BJ (cell line): ENCODE measurements at regions of chr3 and their contacts with region 1.

Region 1: DNA sequence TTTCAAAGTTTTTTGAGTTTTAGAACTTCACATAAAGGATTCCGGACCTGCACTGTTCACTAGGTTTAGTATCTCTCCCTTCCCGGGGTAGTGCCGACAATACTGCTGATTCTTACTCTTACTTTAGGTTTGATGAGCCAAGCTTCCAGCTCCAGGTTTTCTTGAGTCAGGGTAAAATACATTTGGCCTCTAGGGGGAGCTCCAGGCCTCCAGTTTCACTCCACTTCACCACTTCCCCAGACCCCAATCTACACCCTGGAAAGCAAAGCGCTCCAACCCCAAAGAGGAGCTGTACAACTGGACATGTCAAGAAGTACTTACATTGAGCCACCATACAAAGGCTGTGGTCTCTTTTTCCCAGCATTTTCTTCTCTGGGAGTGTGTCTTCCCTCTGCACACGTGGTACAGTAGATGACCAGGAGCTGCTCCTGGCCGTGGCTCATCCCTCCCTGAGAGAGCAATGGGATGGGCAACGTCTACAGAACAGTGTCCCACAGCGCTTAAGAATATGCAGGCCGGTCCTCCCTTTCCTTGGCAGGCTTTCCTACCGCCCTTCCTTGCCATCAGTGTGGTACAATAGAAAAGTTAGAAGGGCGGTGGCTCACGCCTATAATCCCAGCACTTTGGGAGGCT is 93.9 kb upstream of the CCDC80 start:
- DNase-seq: no peak
- H3K4me3 ChIP-seq: no peak overlapping the region
- H3K27me3 ChIP-seq: no peaks in the 10 kb centered on the region
- CTCF ChIP-seq: peak; percentile 77

Region 2: DNA sequence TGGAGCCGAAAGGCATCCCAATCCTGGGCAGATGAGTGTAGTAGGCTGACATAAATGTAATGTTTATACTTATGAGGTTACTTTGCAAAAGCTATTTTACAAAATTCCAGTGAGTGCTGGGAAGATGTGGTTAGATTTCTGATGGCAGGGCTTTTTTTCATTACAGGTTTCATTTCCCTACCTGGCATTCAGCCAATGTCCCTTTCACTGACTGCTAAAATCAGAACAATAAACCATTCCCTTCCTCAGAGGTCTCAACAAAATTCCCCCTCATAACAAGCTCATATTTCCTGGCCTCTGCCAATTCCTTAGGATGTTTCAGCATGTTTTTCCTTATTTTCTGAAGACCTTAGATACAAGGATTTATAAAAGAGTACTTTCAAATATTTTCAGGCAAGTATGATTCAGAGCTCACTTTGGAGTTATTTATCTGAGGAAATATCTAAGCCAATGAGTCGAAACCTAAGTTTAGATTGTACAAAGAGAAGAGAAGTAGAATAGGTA is 53.0 kb before region 1 on chr3:
- CTCF ChIA-PET with region 1: interaction called, 10 read pairs
- POLR2A ChIA-PET with region 1: interaction called, 8 read pairs
- DNase-seq: peak; percentile 61
- H3K4me3 ChIP-seq: no peak overlapping the region
- H3K27me3 ChIP-seq: no peaks in the 10 kb centered on the region
- CTCF ChIP-seq: no peak

Region 3: GRCh38 chr3:112746675-112747280 is 11.9 kb after region 1 on chr3:
- CTCF ChIA-PET with region 1: interaction called, 29 read pairs
- POLR2A ChIA-PET with region 1: no interaction called
- DNase-seq: no peak
- H3K4me3 ChIP-seq: no peak overlapping the region
- H3K27me3 ChIP-seq: no peaks in the 10 kb centered on the region
- CTCF ChIP-seq: no peak

Region 4: GRCh38 chr3:112773864-112774590 is 39.2 kb after region 1 on chr3:
- CTCF ChIA-PET with region 1: interaction called, 15 read pairs
- POLR2A ChIA-PET with region 1: interaction called, 7 read pairs
- DNase-seq: peak; percentile 31
- H3K4me3 ChIP-seq: no peak overlapping the region
- H3K27me3 ChIP-seq: no peaks in the 10 kb centered on the region
- CTCF ChIP-seq: no peak

Region 5: GRCh38 chr3:112814266-112814665 is 79.4 kb after region 1 on chr3:
- CTCF ChIA-PET with region 1: interaction called, 137 read pairs
- POLR2A ChIA-PET with region 1: interaction called, 3 read pairs
- DNase-seq: peak; percentile 28
- H3K4me3 ChIP-seq: no peak overlapping the region
- H3K27me3 ChIP-seq: no peaks in the 10 kb centered on the region
- CTCF ChIP-seq: peak; percentile 66

Region 6: GRCh38 chr3:112829031-112829430 is 94.2 kb after region 1 on chr3:
- CTCF ChIA-PET with region 1: no interaction called
- POLR2A ChIA-PET with region 1: no interaction called
- DNase-seq: no peak
- H3K4me3 ChIP-seq: no peak overlapping the region
- H3K27me3 ChIP-seq: 0 out of 2 replicates have a peak, but pooled peaks cover 4% of the 10 kb centered on the region
- CTCF ChIP-seq: no peak